Colonic mucosa (tissue), 4 donors: ENCODE measurements at regions of chr11 and their contacts with region 1.

Region 1: DNA sequence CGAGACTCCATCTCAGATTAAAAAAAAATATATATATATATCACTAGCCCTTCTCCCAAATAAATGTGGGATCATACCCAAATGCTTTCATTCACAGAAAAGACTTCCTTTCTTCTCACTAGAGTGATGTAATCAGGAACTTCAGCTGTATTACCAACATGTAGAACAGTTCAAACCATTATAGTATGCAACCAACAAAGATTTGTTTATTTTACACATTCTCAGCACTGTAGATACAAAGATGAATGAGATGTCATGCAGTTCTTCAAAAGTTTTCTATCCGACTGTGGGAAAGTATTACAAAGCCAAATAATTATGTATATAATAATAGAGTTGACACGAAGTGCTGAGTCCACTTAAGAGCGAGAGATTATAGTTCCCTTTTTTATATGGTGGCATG is 22.2 kb upstream of the ZNF143 start:
- DNase-seq: no peak
- H3K4me3 ChIP-seq: no peak overlapping the region
- H3K27ac ChIP-seq: no peak overlapping the region
- H3K4me1 ChIP-seq: no peaks in the 10 kb centered on the region
- H3K27me3 ChIP-seq: no peaks in the 10 kb centered on the region
- CTCF ChIP-seq: no peak

Region 2: DNA sequence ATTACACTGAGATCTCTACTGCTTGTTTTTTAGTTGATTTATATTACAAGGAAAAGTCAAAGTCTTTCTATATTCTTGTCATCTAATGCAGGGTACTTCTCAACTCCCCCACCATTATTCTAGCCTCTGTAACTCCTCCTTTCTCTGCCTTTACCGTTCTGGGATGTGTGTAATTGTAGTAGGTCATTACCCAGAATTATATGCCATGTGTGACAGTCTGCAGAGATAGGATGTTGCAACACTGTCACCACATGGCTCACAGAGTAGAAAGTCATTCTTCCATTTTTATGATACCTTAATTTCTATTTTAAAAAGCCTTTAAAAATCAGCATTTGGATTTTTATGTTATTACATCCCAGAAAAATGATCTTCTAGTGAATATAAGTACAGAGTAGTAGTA is 54.9 kb after region 1 on chr11:
- intact Hi-C with region 1: loop called (anchors 10 kb)
- DNase-seq: no peak
- H3K4me3 ChIP-seq: no peak overlapping the region
- H3K27ac ChIP-seq: no peak overlapping the region
- H3K4me1 ChIP-seq: no peaks in the 10 kb centered on the region
- H3K27me3 ChIP-seq: no peaks in the 10 kb centered on the region
- CTCF ChIP-seq: no peak